CD4-positive, alpha-beta memory T cell (primary cell): ENCODE measurements at regions of chr19 and their contacts with region 1.

Region 1: GRCh38 chr19:12938234-12939025 is at the start of gene CALR:
- DNase-seq: peak; percentile 99 to 100 (median 99)
- H3K4me3 ChIP-seq: peak within 1 kb of the TSS; percentile 49 to 97
- H3K4me3 Mint-ChIP-seq: peak within 1 kb of the TSS; percentile 94 to 99 (median 98)
- H3K27ac ChIP-seq: peak within 1 kb of the TSS; percentile 90
- H3K27ac Mint-ChIP-seq: peak within 1 kb of the TSS; percentile 96 to 99 (median 98)
- H3K4me1 ChIP-seq: peaks cover 39% of the 10 kb centered on the region
- H3K4me1 Mint-ChIP-seq: peaks cover 20 to 58% (median 38%) of the 10 kb centered on the region in 4 donors
- H3K27me3 ChIP-seq: no peaks in the 10 kb centered on the region
- H3K27me3 Mint-ChIP-seq: no peaks in the 10 kb centered on the region
- total RNA-seq, gene CALR: 484 to 499 TPM

Region 2: GRCh38 chr19:12610540-12611360 is 327.7 kb before region 1 on chr19 and contains the starts of genes ZNF490 and ZNF791:
- CTCF ChIA-PET with region 1: no interaction called
- POLR2A ChIA-PET with region 1: no interaction called
- intact Hi-C with region 1: no loop called
- DNase-seq: peak; percentile 93 to 98 (median 94)
- H3K4me3 ChIP-seq: peak within 1 kb of the TSS; percentile 89 to 100
- H3K4me3 Mint-ChIP-seq: peak within 1 kb of the TSS; percentile 99 to 100 (median 100)
- H3K27ac ChIP-seq: peak within 1 kb of the TSS; percentile 88
- H3K27ac Mint-ChIP-seq: peak within 1 kb of the TSS; percentile 99 to 100 (median 100)
- H3K4me1 ChIP-seq: peaks cover 57% of the 10 kb centered on the region
- H3K4me1 Mint-ChIP-seq: peaks cover 21 to 59% (median 35%) of the 10 kb centered on the region in 4 donors
- H3K27me3 ChIP-seq: no peaks in the 10 kb centered on the region
- H3K27me3 Mint-ChIP-seq: no peaks in the 10 kb centered on the region
- total RNA-seq, gene ZNF490: 10.6 to 11.8 TPM
- total RNA-seq, gene ZNF791: 46.0 to 46.3 TPM

Region 3: GRCh38 chr19:12736995-12737834 is 201.2 kb before region 1 on chr19 and contains the start of gene GET3:
- CTCF ChIA-PET with region 1: no interaction called
- POLR2A ChIA-PET with region 1: no interaction called
- intact Hi-C with region 1: loop called (anchors 10 kb)
- DNase-seq: peak; percentile 87 to 91 (median 89)
- H3K4me3 ChIP-seq: peak within 1 kb of the TSS; percentile 77 to 80
- H3K4me3 Mint-ChIP-seq: peak within 1 kb of the TSS; percentile 98 to 100 (median 99)
- H3K27ac ChIP-seq: peak within 1 kb of the TSS; percentile 87
- H3K27ac Mint-ChIP-seq: peak within 1 kb of the TSS; percentile 94 to 98 (median 97)
- H3K4me1 ChIP-seq: peaks cover 40% of the 10 kb centered on the region
- H3K4me1 Mint-ChIP-seq: peaks cover 25 to 50% (median 36%) of the 10 kb centered on the region in 4 donors
- H3K27me3 ChIP-seq: no peaks in the 10 kb centered on the region
- H3K27me3 Mint-ChIP-seq: peaks cover 0 to 2% of the 10 kb centered on the region in 2 donors
- total RNA-seq, gene GET3: 30.8 to 34.5 TPM

Region 4: DNA sequence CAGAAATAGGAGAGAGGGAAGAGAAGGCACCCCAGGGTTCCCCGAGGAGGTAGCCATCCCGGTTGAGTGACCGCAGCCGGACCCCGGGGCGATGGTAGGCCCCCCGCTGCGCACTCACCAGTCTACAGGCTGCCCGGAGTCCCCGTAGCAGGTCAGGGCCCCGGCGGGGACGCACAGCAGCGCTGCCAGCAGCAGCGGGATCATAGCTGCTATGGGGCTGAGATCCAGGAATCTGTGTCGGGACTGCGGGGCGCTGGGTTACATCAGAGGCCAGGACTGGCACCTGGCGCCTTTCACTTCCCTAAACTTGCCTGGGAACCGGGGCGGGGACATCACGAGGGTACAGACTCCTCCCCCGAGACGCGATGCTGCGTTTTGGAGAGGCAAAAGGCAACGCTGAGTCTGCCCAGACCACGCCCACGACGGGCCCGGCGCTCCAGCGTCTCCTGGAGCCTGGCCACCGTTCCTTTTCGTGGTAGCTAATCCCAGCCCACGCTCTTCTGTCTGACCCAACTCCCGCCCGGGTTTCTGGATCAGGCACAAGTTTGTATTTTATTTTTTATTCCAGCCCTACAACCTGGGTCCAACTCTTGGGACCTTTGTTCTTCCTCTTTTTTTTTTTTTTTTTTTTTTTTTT is 57.1 kb before region 1 on chr19 and contains the start of gene DNASE2:
- CTCF ChIA-PET with region 1: interaction called, 15 read pairs
- POLR2A ChIA-PET with region 1: interaction called, 17 read pairs
- intact Hi-C with region 1: loop called (anchors 1 kb)
- DNase-seq: peak; percentile 80 to 91 (median 84)
- H3K4me3 ChIP-seq: peak within 1 kb of the TSS; percentile 73 to 76
- H3K4me3 Mint-ChIP-seq: peak within 1 kb of the TSS; percentile 88 to 92 (median 89)
- H3K27ac ChIP-seq: peak within 1 kb of the TSS; percentile 66
- H3K27ac Mint-ChIP-seq: peak within 1 kb of the TSS; percentile 85 to 96 (median 93)
- H3K4me1 ChIP-seq: peaks cover 29% of the 10 kb centered on the region
- H3K4me1 Mint-ChIP-seq: peaks cover 10 to 46% (median 23%) of the 10 kb centered on the region in 4 donors
- H3K27me3 ChIP-seq: no peaks in the 10 kb centered on the region
- H3K27me3 Mint-ChIP-seq: no peaks in the 10 kb centered on the region
- total RNA-seq, gene DNASE2: 31.6 to 32.8 TPM

Region 5: DNA sequence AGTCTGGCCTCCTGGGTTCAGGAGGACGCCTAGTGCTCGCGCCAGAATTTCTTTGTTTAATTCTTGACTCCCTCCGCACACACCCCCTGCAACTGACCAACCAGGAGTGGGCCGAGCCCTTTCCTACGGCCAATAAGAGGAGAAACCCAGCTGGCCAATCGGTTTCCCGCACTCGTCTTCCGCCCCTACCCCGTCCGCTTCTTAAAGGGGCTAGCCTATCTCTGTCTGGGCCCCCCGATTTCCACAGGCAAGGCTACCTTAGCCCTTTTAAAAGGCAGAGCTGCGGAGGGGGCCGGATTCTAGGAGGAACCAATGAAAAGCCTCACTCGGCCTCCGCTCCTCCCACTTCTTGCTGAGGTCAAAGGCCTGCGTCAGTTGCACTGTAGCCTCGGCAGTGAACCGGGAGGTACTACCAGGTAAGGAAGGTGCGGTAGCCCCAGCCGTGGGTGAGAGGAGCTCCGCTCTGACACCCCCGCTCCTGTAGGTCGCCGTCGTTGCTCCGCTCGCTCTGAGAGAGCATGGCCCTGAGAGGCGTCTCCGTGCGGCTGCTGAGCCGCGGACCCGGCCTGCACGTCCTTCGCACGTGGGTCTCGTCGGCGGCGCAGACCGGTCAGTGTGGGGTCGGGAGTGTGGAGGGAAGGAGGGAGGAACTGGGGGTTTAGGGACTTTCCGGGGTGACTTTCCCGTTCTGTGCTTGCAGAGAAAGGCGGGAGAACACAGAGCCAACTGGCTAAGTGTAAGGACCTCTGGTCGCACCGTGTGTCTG is 47.5 kb before region 1 on chr19 and contains the start of gene GCDH:
- CTCF ChIA-PET with region 1: interaction called, 8 read pairs
- POLR2A ChIA-PET with region 1: interaction called, 41 read pairs
- intact Hi-C with region 1: loop called (anchors 1 kb)
- DNase-seq: peak; percentile 96 to 99 (median 97)
- H3K4me3 ChIP-seq: peak within 1 kb of the TSS; percentile 84 to 88
- H3K4me3 Mint-ChIP-seq: peak within 1 kb of the TSS; percentile 97 to 99 (median 99)
- H3K27ac ChIP-seq: peak within 1 kb of the TSS; percentile 69
- H3K27ac Mint-ChIP-seq: peak within 1 kb of the TSS; percentile 93 to 99 (median 97)
- H3K4me1 ChIP-seq: peaks cover 22% of the 10 kb centered on the region
- H3K4me1 Mint-ChIP-seq: peaks cover 14 to 37% (median 25%) of the 10 kb centered on the region in 4 donors
- H3K27me3 ChIP-seq: no peaks in the 10 kb centered on the region
- H3K27me3 Mint-ChIP-seq: no peaks in the 10 kb centered on the region
- total RNA-seq, gene GCDH: 63.9 to 66.1 TPM

Region 6: DNA sequence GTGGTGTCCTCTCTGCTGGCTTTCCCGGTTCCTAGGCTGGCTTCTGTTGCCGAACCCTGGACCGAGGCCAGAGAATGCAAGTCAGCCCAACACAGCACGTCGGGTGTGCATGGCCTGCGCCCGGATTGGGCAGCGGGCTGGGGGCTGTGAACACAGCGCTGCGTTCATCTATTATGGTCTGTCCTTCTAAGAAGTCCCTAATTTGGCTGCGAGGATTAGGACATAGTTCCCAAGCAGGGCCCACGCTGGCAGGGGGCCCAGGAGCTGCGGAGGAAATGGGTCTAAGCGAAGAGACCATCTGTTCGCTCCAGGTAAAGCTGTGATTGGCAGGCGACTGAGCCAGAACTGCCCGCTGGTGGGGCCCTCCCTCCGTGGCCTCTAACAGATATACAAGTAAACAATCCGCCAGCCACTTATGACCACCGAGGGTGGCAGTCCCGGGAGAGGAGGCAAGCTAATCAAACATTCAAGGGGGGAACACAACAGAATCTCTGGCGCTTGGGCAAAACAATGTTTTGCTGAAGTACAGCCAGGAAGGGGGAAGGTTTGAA is 25.3 kb before region 1 on chr19:
- CTCF ChIA-PET with region 1: interaction called, 3 read pairs
- POLR2A ChIA-PET with region 1: interaction called, 26 read pairs
- intact Hi-C with region 1: no loop called
- DNase-seq: no peak
- H3K4me3 ChIP-seq: no peak overlapping the region
- H3K4me3 Mint-ChIP-seq: peak overlapping the region in 2 of 8 donors; percentile 5 to 31
- H3K27ac ChIP-seq: no peak overlapping the region
- H3K27ac Mint-ChIP-seq: peak overlapping the region in 5 of 7 donors; percentile 3 to 98 (median 88)
- H3K4me1 ChIP-seq: peaks cover 21% of the 10 kb centered on the region
- H3K4me1 Mint-ChIP-seq: peaks cover 9 to 29% (median 18%) of the 10 kb centered on the region in 4 donors
- H3K27me3 ChIP-seq: no peaks in the 10 kb centered on the region
- H3K27me3 Mint-ChIP-seq: no peaks in the 10 kb centered on the region

Region 7: DNA sequence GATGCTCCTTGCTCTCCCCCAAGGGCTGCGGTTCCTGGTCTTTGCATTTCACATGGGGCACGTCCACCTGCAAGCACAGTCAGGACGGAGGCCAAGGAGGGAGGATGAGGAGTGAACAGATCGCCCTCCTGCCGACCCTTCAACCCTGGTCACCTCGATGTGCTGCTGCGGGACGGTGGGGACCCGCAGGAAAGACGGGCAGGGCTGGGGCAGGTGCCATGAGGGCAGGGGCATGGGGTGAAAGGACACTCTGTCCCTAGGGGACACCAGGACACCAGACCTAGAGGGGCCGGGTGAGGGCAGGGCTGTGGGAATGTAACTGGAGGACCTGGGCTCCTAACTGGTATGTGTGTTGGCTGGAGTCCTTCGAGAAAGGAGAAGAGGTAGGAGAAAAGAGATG is 20.2 kb before region 1 on chr19:
- CTCF ChIA-PET with region 1: interaction called, 4 read pairs
- POLR2A ChIA-PET with region 1: interaction called, 26 read pairs
- intact Hi-C with region 1: loop called (anchors 1 kb)
- DNase-seq: no peak
- H3K4me3 ChIP-seq: no peak overlapping the region
- H3K4me3 Mint-ChIP-seq: peak overlapping the region in 3 of 8 donors; percentile 33 to 70 (median 59)
- H3K27ac ChIP-seq: no peak overlapping the region
- H3K27ac Mint-ChIP-seq: peak overlapping the region in 3 of 7 donors; percentile 69 to 93 (median 70)
- H3K4me1 ChIP-seq: peaks cover 28% of the 10 kb centered on the region
- H3K4me1 Mint-ChIP-seq: peaks cover 13 to 40% (median 25%) of the 10 kb centered on the region in 4 donors
- H3K27me3 ChIP-seq: no peaks in the 10 kb centered on the region
- H3K27me3 Mint-ChIP-seq: no peaks in the 10 kb centered on the region